ENCODE measurements at regions of chr3 and their contacts with region 1.

Region 1: GRCh38 chr3:70242297-70242882 is 70.0 kb downstream of the MDFIC2 start:
- DNase-seq: no peak
- H3K4me3 ChIP-seq: no peak overlapping the region
- H3K4me3 Mint-ChIP-seq: no peak overlapping the region
- H3K27ac Mint-ChIP-seq: no peak overlapping the region
- H3K4me1 ChIP-seq: no peaks in the 10 kb centered on the region
- H3K4me1 Mint-ChIP-seq: no peaks in the 10 kb centered on the region
- H3K27me3 ChIP-seq: no peaks in the 10 kb centered on the region
- H3K27me3 Mint-ChIP-seq: no peaks in the 10 kb centered on the region
- CTCF ChIP-seq: no peak

Region 2: GRCh38 chr3:70488131-70488530 is 245.7 kb after region 1 on chr3:
- CTCF ChIA-PET with region 1: no interaction called
- POLR2A ChIA-PET with region 1: no interaction called
- intact Hi-C with region 1: loop called (anchors 5 kb)
- DNase-seq: no peak
- H3K4me3 ChIP-seq: no peak overlapping the region
- H3K4me3 Mint-ChIP-seq: no peak overlapping the region
- H3K27ac Mint-ChIP-seq: no peak overlapping the region
- H3K4me1 ChIP-seq: no peaks in the 10 kb centered on the region
- H3K4me1 Mint-ChIP-seq: no peaks in the 10 kb centered on the region
- H3K27me3 ChIP-seq: no peaks in the 10 kb centered on the region
- H3K27me3 Mint-ChIP-seq: peaks cover 24% of the 10 kb centered on the region
- CTCF ChIP-seq: no peak

Measured in Caco-2 (cell line).